Endothelial cell of umbilical vein (primary cell): ENCODE measurements at regions of chr18 and their contacts with region 1.

Region 1: DNA sequence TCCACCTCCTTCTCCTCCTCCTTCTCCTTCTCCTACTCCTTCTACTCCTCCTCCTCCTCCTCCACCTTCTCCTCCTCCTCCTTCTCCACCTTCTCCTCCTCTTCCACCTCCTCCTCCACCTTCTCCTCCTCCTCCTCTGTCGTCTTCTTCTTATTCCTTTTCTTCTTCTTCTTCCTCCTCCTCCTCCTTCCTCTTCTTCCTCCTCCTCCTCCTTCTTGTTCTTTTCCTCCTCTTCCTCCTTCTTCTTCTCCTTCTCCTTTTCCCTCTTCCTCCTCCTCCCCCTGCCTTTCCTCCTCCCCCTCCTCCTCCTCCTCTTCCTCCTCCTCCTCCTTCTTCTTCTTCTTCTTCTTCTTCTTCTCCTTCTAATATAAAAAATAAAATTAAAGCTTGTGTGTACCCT is 971.2 kb upstream of the PIK3C3 start:
- DNase-seq: no peak
- H3K4me3 ChIP-seq: no peak overlapping the region
- H3K27ac ChIP-seq: no peak overlapping the region
- H3K4me1 ChIP-seq: peaks cover 2% of the 10 kb centered on the region
- H3K27me3 ChIP-seq: no peaks in the 10 kb centered on the region
- CTCF ChIP-seq: no peak
- POLR2A ChIP-seq: no peak

Region 2: DNA sequence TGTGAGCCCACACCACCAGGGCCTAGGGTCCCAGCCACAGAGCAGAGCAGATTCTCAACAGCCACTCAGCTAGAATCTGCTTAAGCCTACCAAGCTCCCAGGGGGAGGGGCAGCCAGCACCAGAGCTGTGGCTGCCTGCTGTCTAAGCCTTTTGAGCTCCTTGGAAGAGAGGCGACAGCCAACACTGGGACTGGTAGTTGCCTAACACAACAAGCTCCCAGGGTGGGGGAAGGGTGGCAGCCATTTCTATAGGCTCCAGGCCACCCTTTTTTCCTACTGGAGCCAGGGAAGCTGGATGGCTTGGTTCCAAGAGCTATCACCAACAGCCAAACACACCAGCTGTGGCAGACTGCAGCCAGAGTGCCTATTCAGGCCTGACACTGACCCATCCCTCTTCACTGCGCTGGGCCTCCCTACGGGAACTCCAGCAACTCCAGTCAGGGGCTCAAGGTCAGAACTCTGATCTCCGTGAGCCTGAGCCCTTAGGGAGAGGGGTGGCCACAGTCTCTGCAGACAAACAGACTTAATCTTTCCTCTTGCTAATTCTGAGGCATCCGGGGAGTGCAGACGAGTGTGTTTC is 1593.9 kb before region 1 on chr18:
- CTCF ChIA-PET with region 1: no interaction called
- POLR2A ChIA-PET with region 1: interaction called, 14 read pairs
- dilution Hi-C with region 1: no loop called
- intact Hi-C with region 1: no loop called
- DNase-seq: no peak
- H3K4me3 ChIP-seq: no peak overlapping the region
- H3K27ac ChIP-seq: no peak overlapping the region
- H3K4me1 ChIP-seq: no peaks in the 10 kb centered on the region
- H3K27me3 ChIP-seq: no peaks in the 10 kb centered on the region
- CTCF ChIP-seq: no peak
- POLR2A ChIP-seq: no peak

Region 3: DNA sequence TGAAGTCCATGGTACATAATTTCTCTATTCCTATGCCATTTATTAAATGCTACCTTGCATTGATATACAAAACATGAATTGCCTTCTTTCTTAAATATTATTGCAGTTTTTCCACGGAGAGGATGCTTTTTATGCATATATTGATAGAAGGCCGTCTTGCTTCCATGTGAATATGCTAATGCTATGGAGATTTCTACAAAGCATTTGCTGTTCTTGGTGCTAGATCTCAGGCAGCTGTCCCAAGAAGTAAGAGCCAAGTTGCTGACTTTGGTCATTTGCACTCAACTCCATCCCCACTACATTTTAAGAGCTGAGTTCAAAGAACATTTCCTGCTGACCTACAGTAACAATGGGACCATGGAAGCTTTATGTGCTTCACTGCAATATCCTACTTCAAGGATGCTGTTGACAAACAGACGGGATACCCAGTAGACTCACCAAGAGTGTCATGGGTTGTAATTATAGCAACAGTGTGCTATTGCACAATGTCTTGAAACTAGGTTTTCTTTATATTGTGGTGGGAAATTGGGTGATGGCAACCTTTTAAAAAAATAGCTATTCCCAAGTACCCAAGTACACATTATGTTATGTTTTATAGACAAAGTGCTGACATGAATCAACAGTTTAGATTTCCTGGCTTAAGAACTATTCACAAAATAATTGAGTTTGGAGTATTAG is 201.2 kb before region 1 on chr18:
- CTCF ChIA-PET with region 1: no interaction called
- POLR2A ChIA-PET with region 1: no interaction called
- dilution Hi-C with region 1: no loop called
- intact Hi-C with region 1: no loop called
- DNase-seq: no peak
- H3K4me3 ChIP-seq: no peak overlapping the region
- H3K27ac ChIP-seq: no peak overlapping the region
- H3K4me1 ChIP-seq: no peaks in the 10 kb centered on the region
- H3K27me3 ChIP-seq: no peaks in the 10 kb centered on the region
- CTCF ChIP-seq: no peak
- POLR2A ChIP-seq: no peak

Region 4: GRCh38 chr18:40995529-40995928 is 11.7 kb after region 1 on chr18:
- CTCF ChIA-PET with region 1: no interaction called
- POLR2A ChIA-PET with region 1: no interaction called
- dilution Hi-C with region 1: no loop called
- intact Hi-C with region 1: no loop called
- DNase-seq: no peak
- H3K4me3 ChIP-seq: no peak overlapping the region
- H3K27ac ChIP-seq: no peak overlapping the region
- H3K4me1 ChIP-seq: no peaks in the 10 kb centered on the region
- H3K27me3 ChIP-seq: no peaks in the 10 kb centered on the region
- CTCF ChIP-seq: no peak
- POLR2A ChIP-seq: no peak

Region 5: DNA sequence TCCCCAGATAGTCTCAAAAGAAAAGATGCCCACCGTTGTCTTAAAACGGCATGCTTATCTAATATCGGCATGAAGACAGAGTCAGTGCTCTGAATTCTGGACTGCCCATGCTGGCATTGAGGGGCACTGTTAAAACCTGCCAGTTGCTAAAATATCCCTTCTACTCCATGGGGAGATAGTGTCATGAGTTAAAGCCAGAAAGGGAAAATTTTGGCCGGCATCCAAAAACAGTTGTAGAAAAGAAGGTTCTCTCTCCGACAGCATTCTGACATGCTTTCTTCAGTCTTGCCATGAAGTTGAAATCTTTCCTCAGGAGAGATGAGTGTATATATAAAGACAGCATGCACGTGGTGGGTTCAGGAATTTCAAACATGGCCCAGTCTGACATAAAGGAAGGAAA is 569.9 kb after region 1 on chr18:
- CTCF ChIA-PET with region 1: no interaction called
- POLR2A ChIA-PET with region 1: no interaction called
- dilution Hi-C with region 1: no loop called
- intact Hi-C with region 1: no loop called
- DNase-seq: no peak
- H3K4me3 ChIP-seq: no peak overlapping the region
- H3K27ac ChIP-seq: no peak overlapping the region
- H3K4me1 ChIP-seq: no peaks in the 10 kb centered on the region
- H3K27me3 ChIP-seq: no peaks in the 10 kb centered on the region
- CTCF ChIP-seq: no peak
- POLR2A ChIP-seq: no peak